B cell (primary cell): ENCODE measurements at regions of chr5 and their contacts with region 1.

Region 1: DNA sequence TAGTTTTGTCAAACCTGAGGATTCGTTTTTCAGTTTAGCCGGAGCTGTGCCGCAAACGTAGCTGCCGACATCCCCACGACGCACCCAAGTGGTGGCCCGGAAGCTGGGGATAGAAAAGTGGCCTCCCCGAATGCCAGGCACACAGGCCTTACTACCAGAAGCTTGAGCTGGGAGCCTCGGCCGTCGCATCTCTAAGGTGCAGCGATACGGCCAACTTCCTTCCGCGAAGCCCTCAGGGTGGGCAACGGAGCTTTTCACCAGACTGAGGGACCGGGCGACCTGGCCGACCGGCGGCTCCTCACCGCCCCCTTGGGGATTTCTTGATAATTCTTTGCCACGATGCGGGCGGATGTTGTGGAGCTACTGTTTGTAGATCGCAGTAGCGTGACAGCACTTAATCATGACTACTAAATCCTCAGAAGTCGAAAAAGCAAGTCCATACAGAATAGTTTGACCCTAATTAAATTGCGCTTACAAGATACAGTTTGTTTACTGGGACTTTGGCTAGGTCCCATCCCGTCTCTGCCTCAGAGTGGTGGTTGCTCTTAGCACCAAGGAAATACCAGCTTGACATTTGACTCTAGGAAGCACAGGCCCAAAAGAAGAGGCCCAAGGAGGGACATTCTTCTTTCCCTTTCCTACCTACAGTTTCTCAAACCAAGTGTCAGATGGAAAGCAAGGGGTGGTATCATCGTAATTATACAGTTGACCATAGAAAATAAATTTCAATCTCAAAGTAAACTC is 613 bp upstream of the TMEM267 start:
- DNase-seq: peak; percentile 93
- ATAC-seq: peak; percentile 68
- H3K4me3 ChIP-seq: peak overlapping the region; percentile 58 to 92 (median 89)
- H3K4me3 Mint-ChIP-seq: peak overlapping the region; percentile 100
- H3K27ac ChIP-seq: peak overlapping the region; percentile 94 to 99
- H3K27ac Mint-ChIP-seq: peak overlapping the region; percentile 100
- H3K4me1 ChIP-seq: peaks cover 22 to 23% of the 10 kb centered on the region in 2 donors
- H3K4me1 Mint-ChIP-seq: peaks cover 33% of the 10 kb centered on the region
- H3K27me3 ChIP-seq: no peaks in the 10 kb centered on the region
- H3K27me3 Mint-ChIP-seq: no peaks in the 10 kb centered on the region
- CTCF ChIP-seq: peak; percentile 81

Region 2: GRCh38 chr5:41903892-41904799 is 1580.1 kb before region 1 on chr5 and contains the start of gene RIMOC1:
- CTCF ChIA-PET with region 1: no interaction called
- POLR2A ChIA-PET with region 1: interaction called, 4 read pairs
- intact Hi-C with region 1: loop called (anchors 1 kb)
- DNase-seq: peak; percentile 98
- ATAC-seq: peak; percentile 89
- H3K4me3 ChIP-seq: peak within 1 kb of the TSS; percentile 34 to 90 (median 80)
- H3K4me3 Mint-ChIP-seq: peak within 1 kb of the TSS; percentile 96
- H3K27ac ChIP-seq: peak within 1 kb of the TSS; percentile 89 to 98
- H3K27ac Mint-ChIP-seq: peak within 1 kb of the TSS; percentile 98
- H3K4me1 ChIP-seq: peaks cover 15 to 17% of the 10 kb centered on the region in 2 donors
- H3K4me1 Mint-ChIP-seq: peaks cover 34% of the 10 kb centered on the region
- H3K27me3 ChIP-seq: peaks cover 0 to 3% (median 1%) of the 10 kb centered on the region in 4 experiments
- H3K27me3 Mint-ChIP-seq: peaks cover 8% of the 10 kb centered on the region
- CTCF ChIP-seq: no peak
- total RNA-seq, gene RIMOC1: 32.1 and 33.1 TPM in 2 replicates

Region 3: GRCh38 chr5:42950440-42951292 is 533.6 kb before region 1 on chr5:
- CTCF ChIA-PET with region 1: interaction called, 9 read pairs
- POLR2A ChIA-PET with region 1: interaction called, 5 read pairs
- intact Hi-C with region 1: loop called (anchors 1 kb)
- DNase-seq: peak; percentile 85
- ATAC-seq: peak; percentile 44
- H3K4me3 ChIP-seq: peak overlapping the region; percentile 67 to 92 (median 85)
- H3K4me3 Mint-ChIP-seq: peak overlapping the region; percentile 99
- H3K27ac ChIP-seq: peak overlapping the region; percentile 93 to 97
- H3K27ac Mint-ChIP-seq: peak overlapping the region; percentile 100
- H3K4me1 ChIP-seq: peaks cover 13 to 33% of the 10 kb centered on the region in 2 donors
- H3K4me1 Mint-ChIP-seq: peaks cover 33% of the 10 kb centered on the region
- H3K27me3 ChIP-seq: no peaks in the 10 kb centered on the region
- H3K27me3 Mint-ChIP-seq: no peaks in the 10 kb centered on the region
- CTCF ChIP-seq: no peak

Region 4: GRCh38 chr5:43040287-43041098 is 443.8 kb before region 1 on chr5 and contains the start of gene ANXA2R:
- CTCF ChIA-PET with region 1: interaction called, 7 read pairs
- POLR2A ChIA-PET with region 1: interaction called, 16 read pairs
- intact Hi-C with region 1: no loop called
- DNase-seq: peak; percentile 97
- ATAC-seq: peak; percentile 60
- H3K4me3 ChIP-seq: peak within 1 kb of the TSS; percentile 62 to 95 (median 81)
- H3K4me3 Mint-ChIP-seq: peak within 1 kb of the TSS; percentile 97
- H3K27ac ChIP-seq: peak within 1 kb of the TSS; percentile 98 to 99
- H3K27ac Mint-ChIP-seq: peak within 1 kb of the TSS; percentile 98
- H3K4me1 ChIP-seq: peaks cover 25 to 44% of the 10 kb centered on the region in 2 donors
- H3K4me1 Mint-ChIP-seq: peaks cover 39% of the 10 kb centered on the region
- H3K27me3 ChIP-seq: no peaks in the 10 kb centered on the region
- H3K27me3 Mint-ChIP-seq: no peaks in the 10 kb centered on the region
- CTCF ChIP-seq: peak; percentile 86
- total RNA-seq, gene ANXA2R: 19.3 and 20.0 TPM in 2 replicates

Region 5: GRCh38 chr5:43357067-43357466 is 127.2 kb before region 1 on chr5:
- CTCF ChIA-PET with region 1: no interaction called
- POLR2A ChIA-PET with region 1: no interaction called
- intact Hi-C with region 1: no loop called
- DNase-seq: no peak
- ATAC-seq: no peak
- H3K4me3 ChIP-seq: no peak overlapping the region
- H3K4me3 Mint-ChIP-seq: no peak overlapping the region
- H3K27ac ChIP-seq: no peak overlapping the region
- H3K27ac Mint-ChIP-seq: no peak overlapping the region
- H3K4me1 ChIP-seq: no peaks in the 10 kb centered on the region
- H3K4me1 Mint-ChIP-seq: no peaks in the 10 kb centered on the region
- H3K27me3 ChIP-seq: no peaks in the 10 kb centered on the region
- H3K27me3 Mint-ChIP-seq: no peaks in the 10 kb centered on the region
- CTCF ChIP-seq: no peak

Region 6: DNA sequence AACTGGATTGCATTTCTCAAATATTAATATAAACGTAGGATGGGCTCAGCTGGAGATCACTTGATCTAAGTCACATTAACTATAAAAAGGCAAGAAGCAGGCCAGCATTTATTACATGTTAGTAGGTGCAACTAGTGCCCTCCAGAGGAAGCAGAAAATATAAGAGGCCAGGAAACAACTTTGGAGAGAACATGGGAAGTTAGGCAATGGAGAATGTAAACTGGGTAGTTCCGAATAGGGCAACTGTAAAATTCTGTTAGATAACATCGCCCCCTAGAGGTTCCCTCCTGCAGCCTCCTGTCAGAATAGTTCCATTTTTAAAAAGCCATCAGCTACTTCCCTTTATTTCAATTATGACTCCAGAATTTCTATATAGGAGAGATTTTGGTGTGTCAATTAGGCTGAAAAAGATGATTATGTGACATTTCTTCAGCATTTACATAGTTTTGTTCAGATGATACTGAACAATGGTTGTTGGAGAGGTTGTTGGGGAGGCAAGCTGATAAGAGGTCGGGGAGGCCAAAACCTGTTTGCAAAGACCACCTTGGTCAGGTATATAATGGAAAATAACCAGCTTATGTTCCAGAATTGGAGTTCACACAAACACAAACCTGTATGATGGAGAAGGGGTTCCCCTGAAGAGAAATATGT is 94.5 kb before region 1 on chr5:
- CTCF ChIA-PET with region 1: interaction called, 20 read pairs
- POLR2A ChIA-PET with region 1: no interaction called
- intact Hi-C with region 1: loop called (anchors 2 kb)
- DNase-seq: peak; percentile 73
- ATAC-seq: peak; percentile 61
- H3K4me3 ChIP-seq: no peak overlapping the region
- H3K4me3 Mint-ChIP-seq: no peak overlapping the region
- H3K27ac ChIP-seq: no peak overlapping the region
- H3K27ac Mint-ChIP-seq: no peak overlapping the region
- H3K4me1 ChIP-seq: no peaks in the 10 kb centered on the region
- H3K4me1 Mint-ChIP-seq: peaks cover 17% of the 10 kb centered on the region
- H3K27me3 ChIP-seq: no peaks in the 10 kb centered on the region
- H3K27me3 Mint-ChIP-seq: no peaks in the 10 kb centered on the region
- CTCF ChIP-seq: peak; percentile 91

Region 7: DNA sequence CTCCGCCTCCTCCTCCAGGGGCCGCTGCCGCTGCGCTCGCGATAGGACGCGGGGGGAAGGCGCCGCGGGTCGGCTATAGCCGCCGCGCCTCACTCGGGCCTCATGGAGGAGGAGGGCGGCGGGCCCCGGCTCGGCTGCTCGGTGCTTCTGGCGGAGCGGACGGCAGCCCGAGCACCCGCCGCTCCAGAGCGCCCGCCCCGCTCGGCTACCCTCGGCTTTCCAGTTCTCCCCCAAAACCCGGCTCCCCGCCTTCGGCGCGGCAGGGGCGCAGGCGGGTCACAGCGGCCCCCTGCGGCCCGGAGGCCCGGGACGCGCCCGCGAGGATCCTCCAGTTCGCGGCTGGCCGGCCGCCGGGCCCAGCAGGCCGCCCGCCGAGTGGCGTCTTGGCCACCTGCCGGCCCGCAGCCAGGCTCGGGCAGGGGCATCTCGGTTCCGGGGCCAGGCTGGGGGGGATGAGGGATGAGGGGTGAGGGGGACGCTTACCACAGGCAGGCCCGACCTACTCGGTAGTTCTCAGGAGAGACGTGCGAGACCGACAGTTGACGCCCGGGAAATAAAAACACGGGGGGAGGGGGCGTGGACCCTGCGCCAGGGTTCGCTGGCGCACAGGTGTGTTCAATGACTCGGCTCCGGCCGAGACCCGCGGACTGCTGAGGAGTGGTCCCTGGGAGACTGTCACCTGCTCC is 72.7 kb after region 1 on chr5 and contains the start of gene PAIP1:
- CTCF ChIA-PET with region 1: interaction called, 21 read pairs
- POLR2A ChIA-PET with region 1: interaction called, 18 read pairs
- intact Hi-C with region 1: loop called (anchors 1 kb)
- DNase-seq: peak; percentile 95
- ATAC-seq: peak; percentile 73
- H3K4me3 ChIP-seq: peak within 1 kb of the TSS; percentile 66 to 83 (median 79)
- H3K4me3 Mint-ChIP-seq: peak within 1 kb of the TSS; percentile 93
- H3K27ac ChIP-seq: peak within 1 kb of the TSS; percentile 81 to 91
- H3K27ac Mint-ChIP-seq: peak within 1 kb of the TSS; percentile 92
- H3K4me1 ChIP-seq: peaks cover 14 to 31% of the 10 kb centered on the region in 2 donors
- H3K4me1 Mint-ChIP-seq: peaks cover 16% of the 10 kb centered on the region
- H3K27me3 ChIP-seq: no peaks in the 10 kb centered on the region
- H3K27me3 Mint-ChIP-seq: no peaks in the 10 kb centered on the region
- CTCF ChIP-seq: peak; percentile 87
- total RNA-seq, gene PAIP1: 31.8 and 35.9 TPM in 2 replicates

Region 8: GRCh38 chr5:44412286-44412685 is 928.0 kb after region 1 on chr5:
- CTCF ChIA-PET with region 1: no interaction called
- POLR2A ChIA-PET with region 1: no interaction called
- intact Hi-C with region 1: no loop called
- DNase-seq: no peak
- ATAC-seq: no peak
- H3K4me3 ChIP-seq: no peak overlapping the region
- H3K4me3 Mint-ChIP-seq: no peak overlapping the region
- H3K27ac ChIP-seq: no peak overlapping the region
- H3K27ac Mint-ChIP-seq: no peak overlapping the region
- H3K4me1 ChIP-seq: no peaks in the 10 kb centered on the region
- H3K4me1 Mint-ChIP-seq: no peaks in the 10 kb centered on the region
- H3K27me3 ChIP-seq: no peaks in the 10 kb centered on the region
- H3K27me3 Mint-ChIP-seq: no peaks in the 10 kb centered on the region
- CTCF ChIP-seq: no peak